Ovary (tissue), 10 donors: ENCODE measurements at regions of chr10 and their contacts with region 1.

Region 1: GRCh38 chr10:123132576-123133477 is 2.9 kb upstream of the HMX3 start:
- DNase-seq: peak; percentile 62 to 83 (median 79)
- H3K4me3 ChIP-seq: no peak overlapping the region
- H3K27ac ChIP-seq: no peak overlapping the region
- H3K4me1 ChIP-seq: peaks cover 15% of the 10 kb centered on the region
- H3K27me3 ChIP-seq: peaks cover 14% of the 10 kb centered on the region
- CTCF ChIP-seq: peak; percentile 41 to 61 (median 49)
- EP300 ChIP-seq: no peak
- POLR2A ChIP-seq: no peak

Region 2: GRCh38 chr10:121831777-121832176 is 1301.0 kb before region 1 on chr10:
- intact Hi-C with region 1: no loop called
- DNase-seq: no peak
- H3K4me3 ChIP-seq: no peak overlapping the region
- H3K27ac ChIP-seq: no peak overlapping the region
- H3K4me1 ChIP-seq: no peaks in the 10 kb centered on the region
- H3K27me3 ChIP-seq: no peaks in the 10 kb centered on the region
- CTCF ChIP-seq: no peak
- EP300 ChIP-seq: no peak
- POLR2A ChIP-seq: no peak

Region 3: GRCh38 chr10:122592161-122592560 is 540.7 kb before region 1 on chr10:
- intact Hi-C with region 1: no loop called
- DNase-seq: no peak
- H3K4me3 ChIP-seq: no peak overlapping the region
- H3K27ac ChIP-seq: no peak overlapping the region
- H3K4me1 ChIP-seq: no peaks in the 10 kb centered on the region
- H3K27me3 ChIP-seq: no peaks in the 10 kb centered on the region
- CTCF ChIP-seq: no peak
- EP300 ChIP-seq: no peak
- POLR2A ChIP-seq: no peak

Region 4: GRCh38 chr10:122990278-122990677 is 142.5 kb before region 1 on chr10:
- intact Hi-C with region 1: no loop called
- DNase-seq: no peak
- H3K4me3 ChIP-seq: no peak overlapping the region
- H3K27ac ChIP-seq: no peak overlapping the region
- H3K4me1 ChIP-seq: no peaks in the 10 kb centered on the region
- H3K27me3 ChIP-seq: no peaks in the 10 kb centered on the region
- CTCF ChIP-seq: no peak
- EP300 ChIP-seq: no peak
- POLR2A ChIP-seq: no peak

Region 5: GRCh38 chr10:123559066-123559822 is 426.4 kb after region 1 on chr10:
- intact Hi-C with region 1: loop called in 3 of 4 experiments (anchors 5 to 10 kb)
- DNase-seq: peak; percentile 20 to 77 (median 49)
- H3K4me3 ChIP-seq: no peak overlapping the region
- H3K27ac ChIP-seq: no peak overlapping the region
- H3K4me1 ChIP-seq: no peaks in the 10 kb centered on the region
- H3K27me3 ChIP-seq: no peaks in the 10 kb centered on the region
- CTCF ChIP-seq: peak; percentile 40 to 76 (median 68)
- EP300 ChIP-seq: no peak
- POLR2A ChIP-seq: no peak

Region 6: DNA sequence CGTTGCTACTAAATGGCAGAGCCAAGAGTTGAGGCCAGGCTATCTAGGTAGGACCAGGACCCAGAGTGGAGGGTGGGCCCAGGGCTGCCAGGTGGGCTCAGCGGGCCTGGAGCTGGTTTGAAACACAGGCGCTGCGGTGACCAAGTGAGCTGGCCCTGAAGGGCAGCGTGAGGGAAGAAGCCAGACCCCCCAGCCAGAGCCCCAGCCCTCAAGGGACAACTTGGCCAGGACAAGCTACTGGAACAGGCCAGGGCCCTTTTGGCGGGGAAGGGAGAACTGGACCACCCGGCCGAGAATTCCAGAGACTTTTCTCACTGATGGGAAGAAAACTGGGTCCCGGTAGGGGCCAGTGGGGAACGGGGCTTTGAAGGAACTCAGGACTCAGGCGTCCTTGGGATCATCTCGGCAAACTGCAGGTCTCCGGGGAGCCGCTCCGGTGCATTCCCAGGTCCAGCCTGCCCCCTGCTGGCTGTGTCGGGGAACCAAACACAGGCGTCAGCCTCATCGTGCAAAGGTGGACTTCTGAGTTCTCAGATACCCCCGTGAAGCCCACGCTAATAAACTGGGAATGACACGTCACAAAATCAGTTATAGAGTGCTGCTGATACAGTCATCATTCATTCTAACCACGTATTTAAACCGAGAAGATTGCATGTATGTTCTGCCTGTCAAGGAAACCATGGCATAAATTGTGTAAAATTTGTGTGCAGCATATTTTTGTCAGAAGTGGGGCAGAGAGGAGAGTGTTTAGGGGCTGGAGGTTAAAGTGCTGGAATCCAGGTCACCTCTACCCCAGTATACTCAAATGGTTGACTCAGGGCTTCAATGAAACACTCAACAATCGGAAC is 834.8 kb after region 1 on chr10:
- intact Hi-C with region 1: loop called in 1 of 4 experiments (anchors 10 kb)
- DNase-seq: peak; percentile 56 to 86 (median 80)
- H3K4me3 ChIP-seq: no peak overlapping the region
- H3K27ac ChIP-seq: no peak overlapping the region
- H3K4me1 ChIP-seq: no peaks in the 10 kb centered on the region
- H3K27me3 ChIP-seq: no peaks in the 10 kb centered on the region
- CTCF ChIP-seq: peak; percentile 76 to 87 (median 81)
- EP300 ChIP-seq: no peak
- POLR2A ChIP-seq: no peak